Common myeloid progenitor, CD34-positive (primary cell): ENCODE measurements at regions of chr14 and their contacts with region 1.

Region 1: GRCh38 chr14:21014761-21015190 is 10.1 kb downstream of the NDRG2 start:
- DNase-seq: peak; percentile 82 to 90 (median 84)
- H3K4me3 ChIP-seq: no peak overlapping the region
- H3K27ac ChIP-seq: no peak overlapping the region
- H3K4me1 ChIP-seq: peaks cover 0 to 17% (median 4%) of the 10 kb centered on the region in 4 experiments
- H3K27me3 ChIP-seq: peaks cover 0 to 3% (median 0%) of the 10 kb centered on the region in 5 experiments

Region 2: GRCh38 chr14:20904393-20905029 is 110.3 kb before region 1 on chr14:
- CTCF ChIA-PET with region 1: no interaction called
- POLR2A ChIA-PET with region 1: no interaction called
- DNase-seq: peak in 2 of 3 donors; percentile 29 to 33
- H3K4me3 ChIP-seq: no peak overlapping the region
- H3K27ac ChIP-seq: no peak overlapping the region
- H3K4me1 ChIP-seq: peaks cover 0 to 12% (median 0%) of the 10 kb centered on the region in 4 experiments
- H3K27me3 ChIP-seq: no peaks in the 10 kb centered on the region

Region 3: DNA sequence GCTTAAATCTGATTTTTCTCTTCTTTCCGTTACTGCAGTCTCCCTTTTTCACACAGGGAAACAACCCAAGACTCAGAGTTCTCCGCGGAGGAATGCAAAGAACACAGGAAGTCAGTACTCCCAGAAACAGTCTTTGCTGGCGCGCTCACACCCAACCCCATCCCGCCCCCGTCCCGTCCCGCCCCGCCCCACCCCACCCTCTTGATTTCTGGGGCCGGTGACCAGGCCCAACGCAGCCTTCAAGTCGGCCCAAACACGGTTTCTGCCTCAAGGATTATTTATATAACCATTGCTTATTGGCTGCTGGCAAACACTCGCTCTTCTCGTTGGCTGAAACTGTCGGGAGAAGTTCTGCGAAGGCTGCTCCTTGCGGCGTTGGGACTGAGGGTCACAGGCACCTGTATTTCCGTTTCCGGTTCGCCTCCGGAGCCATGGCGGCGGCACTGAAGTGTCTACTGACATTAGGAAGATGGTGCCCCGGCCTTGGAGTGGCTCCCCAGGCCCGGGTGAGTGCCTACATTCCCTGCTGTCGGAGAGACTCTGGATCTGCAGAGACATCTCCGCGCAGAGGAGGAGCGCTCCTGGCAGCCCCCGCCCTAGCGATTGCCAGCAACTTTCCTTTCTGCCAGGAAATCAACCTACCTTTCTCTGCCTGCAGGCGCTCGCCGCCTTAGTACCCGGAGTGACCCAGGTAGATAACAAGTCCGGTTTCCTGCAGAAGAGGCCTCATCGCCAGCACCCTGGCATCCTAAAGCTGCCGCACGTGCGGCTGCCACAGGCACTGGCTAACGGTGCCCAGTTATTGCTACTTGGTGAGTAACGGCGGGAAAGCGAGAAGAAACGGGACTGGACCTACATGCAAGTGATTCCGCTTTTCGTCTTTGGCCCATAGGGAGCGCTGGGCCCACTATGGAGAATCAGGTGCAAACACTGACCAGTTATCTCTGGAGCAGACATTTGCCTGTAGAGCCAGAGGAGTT is 24.9 kb before region 1 on chr14 and contains the start of gene METTL17:
- CTCF ChIA-PET with region 1: interaction called, 13 read pairs
- POLR2A ChIA-PET with region 1: no interaction called
- DNase-seq: peak; percentile 91 to 94 (median 93)
- H3K4me3 ChIP-seq: peak within 1 kb of the TSS; percentile 84 to 99 (median 93)
- H3K27ac ChIP-seq: peak within 1 kb of the TSS; percentile 33 to 78
- H3K4me1 ChIP-seq: peaks cover 0 to 27% (median 20%) of the 10 kb centered on the region in 4 experiments
- H3K27me3 ChIP-seq: no peaks in the 10 kb centered on the region

Region 4: GRCh38 chr14:21025371-21026151 is 10.8 kb after region 1 on chr14:
- CTCF ChIA-PET with region 1: interaction called, 63 read pairs
- POLR2A ChIA-PET with region 1: no interaction called
- DNase-seq: peak in 1 of 3 donors; percentile 64
- H3K4me3 ChIP-seq: peak overlapping the region; percentile 42 to 89 (median 62)
- H3K27ac ChIP-seq: peak overlapping the region in 1 of 2 experiments; percentile 40
- H3K4me1 ChIP-seq: peaks cover 3 to 26% (median 12%) of the 10 kb centered on the region in 4 experiments
- H3K27me3 ChIP-seq: peaks cover 0 to 23% (median 6%) of the 10 kb centered on the region in 5 experiments

Region 5: DNA sequence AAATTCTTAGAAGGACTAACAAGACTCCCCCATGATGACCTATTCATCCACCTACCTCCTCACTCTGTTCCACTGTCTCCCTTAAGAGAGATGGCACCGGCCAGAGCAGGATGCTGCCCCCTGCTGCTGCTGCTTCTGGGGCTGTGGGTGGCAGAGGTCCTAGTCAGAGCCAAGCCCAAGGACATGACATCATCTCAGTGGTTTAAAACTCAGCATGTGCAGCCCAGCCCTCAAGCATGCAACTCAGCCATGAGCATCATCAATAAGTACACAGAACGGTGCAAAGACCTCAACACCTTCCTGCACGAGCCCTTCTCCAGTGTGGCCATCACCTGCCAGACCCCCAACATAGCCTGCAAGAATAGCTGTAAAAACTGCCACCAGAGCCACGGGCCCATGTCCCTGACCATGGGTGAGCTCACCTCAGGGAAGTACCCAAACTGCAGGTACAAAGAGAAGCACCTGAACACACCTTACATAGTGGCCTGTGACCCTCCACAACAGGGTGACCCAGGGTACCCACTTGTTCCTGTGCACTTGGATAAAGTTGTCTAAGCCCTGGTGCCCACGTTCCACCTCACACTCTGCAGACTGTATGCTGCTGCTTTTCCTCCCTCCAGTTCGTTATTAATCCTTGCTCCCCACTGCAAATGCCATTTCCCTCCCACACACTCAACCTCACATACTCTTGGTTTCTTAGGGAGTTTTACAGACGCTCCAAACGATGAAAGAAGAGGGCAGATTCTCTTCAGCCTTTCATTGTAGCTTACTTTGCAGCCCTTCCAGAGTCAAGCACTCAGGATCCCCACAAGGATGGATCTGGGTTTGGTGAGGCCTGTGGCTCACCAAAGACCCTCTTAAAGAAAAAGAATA is 43.3 kb after region 1 on chr14 and contains the start of gene RNASE8:
- CTCF ChIA-PET with region 1: interaction called, 26 read pairs
- POLR2A ChIA-PET with region 1: no interaction called
- DNase-seq: peak in 1 of 3 donors; percentile 52
- H3K4me3 ChIP-seq: no peak within 1 kb of the TSS
- H3K27ac ChIP-seq: no peak within 1 kb of the TSS
- H3K4me1 ChIP-seq: no peaks in the 10 kb centered on the region
- H3K27me3 ChIP-seq: peaks cover 0 to 4% (median 0%) of the 10 kb centered on the region in 5 experiments

Region 6: GRCh38 chr14:21092273-21093011 is 77.7 kb after region 1 on chr14:
- CTCF ChIA-PET with region 1: interaction called, 105 read pairs
- POLR2A ChIA-PET with region 1: no interaction called
- DNase-seq: peak; percentile 82 to 91 (median 85)
- H3K4me3 ChIP-seq: no peak overlapping the region
- H3K27ac ChIP-seq: no peak overlapping the region
- H3K4me1 ChIP-seq: peaks cover 0 to 24% (median 10%) of the 10 kb centered on the region in 4 experiments
- H3K27me3 ChIP-seq: no peaks in the 10 kb centered on the region